MCF 10A (cell line): ENCODE measurements at regions of chr19 and their contacts with region 1.

Region 1: DNA sequence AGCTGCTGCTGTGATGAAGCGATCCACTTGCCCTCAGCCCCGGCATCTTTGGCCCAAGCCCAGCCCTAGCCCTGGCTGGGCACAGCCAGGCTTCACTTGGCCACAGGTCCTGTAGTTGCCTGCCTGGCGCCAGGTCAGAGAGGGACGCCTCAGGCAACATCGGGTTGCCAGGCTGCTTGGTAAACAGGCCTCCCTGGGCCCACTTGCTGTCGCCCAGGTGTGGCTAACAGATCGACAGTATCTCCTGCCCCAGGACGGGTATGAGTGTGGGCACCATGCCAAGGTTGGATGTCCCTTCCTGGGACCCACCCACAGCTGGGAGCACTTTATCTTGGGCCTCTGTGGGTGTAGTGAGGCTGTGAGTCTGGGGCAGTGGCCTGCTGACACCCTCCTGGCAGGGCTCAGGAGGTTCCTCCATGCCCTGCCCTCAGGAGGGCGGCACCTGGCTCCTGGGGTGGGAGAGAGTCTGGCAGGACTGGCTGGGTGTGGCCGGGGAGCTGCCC is 27.8 kb downstream of the CARM1 start:
- DNase-seq: peak; percentile 85
- H3K4me3 Mint-ChIP-seq: peak overlapping the region; percentile 62
- H3K27ac Mint-ChIP-seq: peak overlapping the region; percentile 95
- H3K4me1 Mint-ChIP-seq: peaks cover 13% of the 10 kb centered on the region
- H3K27me3 Mint-ChIP-seq: no peaks in the 10 kb centered on the region
- CTCF ChIP-seq: no peak

Region 2: DNA sequence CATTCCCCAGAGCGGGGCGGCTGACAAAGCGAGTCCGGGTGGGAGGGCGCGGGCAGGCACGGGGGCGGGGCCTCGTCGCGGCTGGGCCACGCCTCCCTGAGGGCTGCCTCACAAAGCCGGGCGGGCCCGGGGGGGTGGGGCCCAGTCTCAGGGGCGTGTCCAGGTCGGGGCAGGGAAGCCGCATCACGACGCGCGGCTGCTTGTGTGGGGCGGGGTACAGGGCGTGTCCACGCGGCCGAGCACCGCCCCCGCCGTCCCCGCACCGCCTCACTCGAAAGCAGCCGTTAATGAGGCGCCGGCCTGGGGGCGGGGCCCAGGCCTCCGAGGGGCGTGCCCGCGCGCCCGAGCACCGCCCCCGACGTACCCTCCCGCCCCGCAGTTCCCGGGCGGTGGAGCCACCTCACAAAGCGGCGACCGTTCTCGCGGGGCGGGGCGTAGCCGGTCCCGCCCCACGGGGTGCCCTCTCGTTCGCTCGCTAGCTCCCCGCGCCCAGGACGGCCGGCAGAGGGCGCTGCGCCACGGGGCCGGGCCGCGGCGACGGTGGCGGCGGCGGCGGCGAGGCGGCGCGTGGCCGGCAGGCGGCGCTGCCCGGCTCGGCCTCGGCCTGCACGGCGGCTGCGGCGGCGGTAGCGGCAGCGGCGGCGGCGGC is 28.1 kb before region 1 on chr19 and contains the start of gene CARM1:
- CTCF ChIA-PET with region 1: interaction called, 6 read pairs
- POLR2A ChIA-PET with region 1: interaction called, 7 read pairs
- intact Hi-C with region 1: loop called (anchors 1 kb)
- DNase-seq: peak; percentile 98
- H3K4me3 Mint-ChIP-seq: peak within 1 kb of the TSS; percentile 75
- H3K27ac Mint-ChIP-seq: peak within 1 kb of the TSS; percentile 75
- H3K4me1 Mint-ChIP-seq: no peaks in the 10 kb centered on the region
- H3K27me3 Mint-ChIP-seq: no peaks in the 10 kb centered on the region
- CTCF ChIP-seq: peak; percentile 52
- total RNA-seq, gene CARM1: 49.5 and 51.7 TPM in 2 replicates

Region 3: DNA sequence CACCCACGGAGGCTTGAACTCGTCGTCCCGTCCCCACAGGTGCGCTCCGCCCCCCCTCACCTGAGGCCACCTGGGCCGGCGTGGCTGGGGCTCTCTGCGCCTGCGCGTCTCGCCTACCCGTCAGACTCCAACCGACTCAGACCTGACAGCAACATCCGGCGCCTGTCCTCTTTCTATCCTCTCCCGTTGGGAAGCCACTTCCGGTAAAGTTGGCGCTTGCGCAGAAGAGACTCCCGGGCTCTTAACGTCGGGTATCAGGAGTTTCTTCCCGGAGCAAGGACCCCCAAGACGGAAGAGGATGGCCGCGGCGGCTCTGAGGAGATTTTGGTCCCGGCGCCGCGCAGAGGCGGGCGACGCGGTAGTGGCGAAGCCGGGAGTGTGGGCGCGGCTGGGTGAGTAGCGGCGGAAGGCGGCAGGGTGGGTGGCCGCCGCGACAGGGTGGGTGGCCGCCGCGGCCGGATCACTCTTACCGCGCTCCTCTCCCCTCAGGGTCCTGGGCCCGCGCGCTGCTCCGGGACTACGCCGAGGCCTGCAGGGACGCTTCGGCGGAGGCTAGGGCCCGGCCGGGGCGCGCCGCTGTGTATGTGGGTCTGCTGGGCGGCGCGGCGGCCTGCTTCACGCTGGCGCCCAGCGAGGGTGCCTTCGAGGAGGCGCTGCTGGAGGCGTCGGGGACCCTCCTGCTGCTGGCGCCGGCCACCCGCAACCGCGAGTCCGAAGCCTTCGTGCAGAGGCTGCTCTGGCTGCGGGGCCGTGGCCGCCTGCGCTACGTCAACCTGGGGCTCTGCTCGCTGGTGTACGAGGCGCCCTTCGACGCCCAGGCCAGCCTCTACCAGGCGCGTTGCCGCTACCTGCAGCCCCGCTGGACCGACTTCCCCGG is 29.6 kb after region 1 on chr19 and contains the starts of genes TIMM29 and YIPF2:
- CTCF ChIA-PET with region 1: no interaction called
- POLR2A ChIA-PET with region 1: interaction called, 10 read pairs
- intact Hi-C with region 1: no loop called
- DNase-seq: peak; percentile 100
- H3K4me3 Mint-ChIP-seq: peak within 1 kb of the TSS; percentile 95
- H3K27ac Mint-ChIP-seq: peak within 1 kb of the TSS; percentile 85
- H3K4me1 Mint-ChIP-seq: no peaks in the 10 kb centered on the region
- H3K27me3 Mint-ChIP-seq: no peaks in the 10 kb centered on the region
- CTCF ChIP-seq: no peak
- total RNA-seq, gene TIMM29: 18.3 and 19.3 TPM in 2 replicates
- total RNA-seq, gene YIPF2: 65.5 and 75.3 TPM in 2 replicates